PC-3 (cell line): ENCODE measurements at regions of chr12 and their contacts with region 1.

Region 1: GRCh38 chr12:121550974-121551634 is 29.7 kb downstream of the KDM2B start:
- DNase-seq: no peak
- ATAC-seq: no peak
- H3K4me3 ChIP-seq: no peak overlapping the region
- H3K27ac ChIP-seq: no peak overlapping the region
- H3K4me1 ChIP-seq: no peaks in the 10 kb centered on the region
- H3K27me3 ChIP-seq: no peaks in the 10 kb centered on the region
- CTCF ChIP-seq: no peak

Region 2: GRCh38 chr12:121513464-121514183 is 37.5 kb before region 1 on chr12:
- CTCF ChIA-PET with region 1: no interaction called
- POLR2A ChIA-PET with region 1: no interaction called
- intact Hi-C with region 1: no loop called
- DNase-seq: peak; percentile 44
- ATAC-seq: peak; percentile 93
- H3K4me3 ChIP-seq: no peak overlapping the region
- H3K27ac ChIP-seq: no peak overlapping the region
- H3K4me1 ChIP-seq: no peaks in the 10 kb centered on the region
- H3K27me3 ChIP-seq: no peaks in the 10 kb centered on the region
- CTCF ChIP-seq: no peak

Region 3: GRCh38 chr12:121530600-121531355 is 20.3 kb before region 1 on chr12:
- CTCF ChIA-PET with region 1: interaction called, 10 read pairs
- POLR2A ChIA-PET with region 1: no interaction called
- intact Hi-C with region 1: no loop called
- DNase-seq: peak; percentile 44
- ATAC-seq: peak; percentile 80
- H3K4me3 ChIP-seq: no peak overlapping the region
- H3K27ac ChIP-seq: no peak overlapping the region
- H3K4me1 ChIP-seq: 0 out of 2 replicates have a peak, but pooled peaks cover 5% of the 10 kb centered on the region
- H3K27me3 ChIP-seq: no peaks in the 10 kb centered on the region
- CTCF ChIP-seq: no peak

Region 4: DNA sequence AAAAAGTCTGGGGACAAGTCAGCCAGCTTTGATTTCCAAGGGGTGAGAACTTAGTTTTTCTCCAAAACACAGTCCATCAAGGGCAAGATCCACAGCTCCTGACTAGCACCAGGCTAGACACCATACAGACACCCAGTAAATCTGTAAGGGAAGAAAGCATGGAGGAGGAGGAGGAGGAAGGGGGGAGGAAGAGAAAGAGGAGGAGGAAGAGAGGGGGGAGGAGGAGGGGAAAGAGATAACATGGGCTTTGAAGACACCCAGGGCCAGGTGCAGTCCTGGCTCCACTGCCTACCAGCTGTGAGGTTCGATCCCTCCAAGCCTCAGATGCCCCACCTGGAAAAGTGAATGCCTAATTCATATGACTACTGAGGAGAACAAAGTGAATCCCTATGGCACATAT is 11.4 kb after region 1 on chr12:
- CTCF ChIA-PET with region 1: no interaction called
- POLR2A ChIA-PET with region 1: interaction called, 19 read pairs
- intact Hi-C with region 1: no loop called
- DNase-seq: no peak
- ATAC-seq: no peak
- H3K4me3 ChIP-seq: no peak overlapping the region
- H3K27ac ChIP-seq: no peak overlapping the region
- H3K4me1 ChIP-seq: no peaks in the 10 kb centered on the region
- H3K27me3 ChIP-seq: no peaks in the 10 kb centered on the region
- CTCF ChIP-seq: no peak

Region 5: GRCh38 chr12:121579981-121580868 is 29.1 kb after region 1 on chr12:
- CTCF ChIA-PET with region 1: interaction called, 24 read pairs
- POLR2A ChIA-PET with region 1: interaction called, 3 read pairs
- intact Hi-C with region 1: no loop called
- DNase-seq: peak; percentile 63
- ATAC-seq: peak; percentile 63
- H3K4me3 ChIP-seq: peak overlapping the region; percentile 82
- H3K27ac ChIP-seq: peak overlapping the region; percentile 38
- H3K4me1 ChIP-seq: peaks cover 50% of the 10 kb centered on the region
- H3K27me3 ChIP-seq: no peaks in the 10 kb centered on the region
- CTCF ChIP-seq: no peak

Region 6: GRCh38 chr12:121626087-121626852 is 75.2 kb after region 1 on chr12 and contains the start of gene ORAI1:
- CTCF ChIA-PET with region 1: interaction called, 31 read pairs
- POLR2A ChIA-PET with region 1: no interaction called
- intact Hi-C with region 1: loop called (anchors 1 kb)
- DNase-seq: peak; percentile 99
- ATAC-seq: peak; percentile 70
- H3K4me3 ChIP-seq: peak within 1 kb of the TSS; percentile 79
- H3K27ac ChIP-seq: peak within 1 kb of the TSS; percentile 29
- H3K4me1 ChIP-seq: peaks cover 34% of the 10 kb centered on the region
- H3K27me3 ChIP-seq: no peaks in the 10 kb centered on the region
- CTCF ChIP-seq: no peak
- total RNA-seq, gene ORAI1: 31.4 and 35.0 TPM in 2 replicates

Region 7: DNA sequence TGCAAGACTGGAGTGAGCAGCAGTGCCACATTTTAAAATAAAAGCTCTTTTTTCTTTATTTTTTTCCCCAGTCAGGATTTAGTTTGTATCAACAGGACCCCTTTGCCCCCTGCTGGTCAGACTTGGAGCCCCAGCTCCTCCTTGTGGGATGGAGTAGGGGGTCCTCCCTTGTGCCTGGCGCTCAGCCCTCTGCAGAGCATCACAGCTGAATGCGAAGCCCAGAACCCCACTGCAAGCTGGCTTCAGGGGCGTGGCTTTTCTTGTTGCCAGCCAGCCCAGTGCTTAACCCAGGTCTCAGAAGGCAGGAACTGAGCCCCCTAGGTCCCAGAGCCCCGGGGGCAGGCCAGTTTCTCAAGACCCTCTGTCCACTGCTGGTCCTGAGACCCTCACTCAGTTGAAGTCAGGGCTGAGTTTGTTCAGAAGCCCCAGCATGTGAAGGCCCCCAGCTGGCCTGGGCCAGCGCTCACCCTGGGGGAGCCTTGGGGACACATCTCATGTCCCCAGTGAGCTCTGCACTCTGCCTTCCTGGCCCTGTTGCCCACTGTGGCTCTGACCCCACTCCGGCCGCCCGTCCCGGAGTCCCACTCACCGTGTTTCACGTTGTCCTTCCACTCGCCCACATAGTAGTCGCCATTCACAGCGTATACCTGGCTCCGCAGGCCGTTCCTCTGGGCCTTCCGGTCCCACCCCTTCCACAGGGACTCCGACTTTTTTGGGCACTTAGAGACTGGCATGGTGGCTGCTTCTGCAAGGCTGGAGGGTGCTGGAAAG is 117.8 kb after region 1 on chr12:
- CTCF ChIA-PET with region 1: interaction called, 49 read pairs
- POLR2A ChIA-PET with region 1: no interaction called
- intact Hi-C with region 1: loop called (anchors 1 kb)
- DNase-seq: peak; percentile 61
- ATAC-seq: no peak
- H3K4me3 ChIP-seq: no peak overlapping the region
- H3K27ac ChIP-seq: no peak overlapping the region
- H3K4me1 ChIP-seq: peaks cover 10% of the 10 kb centered on the region
- H3K27me3 ChIP-seq: no peaks in the 10 kb centered on the region
- CTCF ChIP-seq: peak; percentile 88

Region 8: DNA sequence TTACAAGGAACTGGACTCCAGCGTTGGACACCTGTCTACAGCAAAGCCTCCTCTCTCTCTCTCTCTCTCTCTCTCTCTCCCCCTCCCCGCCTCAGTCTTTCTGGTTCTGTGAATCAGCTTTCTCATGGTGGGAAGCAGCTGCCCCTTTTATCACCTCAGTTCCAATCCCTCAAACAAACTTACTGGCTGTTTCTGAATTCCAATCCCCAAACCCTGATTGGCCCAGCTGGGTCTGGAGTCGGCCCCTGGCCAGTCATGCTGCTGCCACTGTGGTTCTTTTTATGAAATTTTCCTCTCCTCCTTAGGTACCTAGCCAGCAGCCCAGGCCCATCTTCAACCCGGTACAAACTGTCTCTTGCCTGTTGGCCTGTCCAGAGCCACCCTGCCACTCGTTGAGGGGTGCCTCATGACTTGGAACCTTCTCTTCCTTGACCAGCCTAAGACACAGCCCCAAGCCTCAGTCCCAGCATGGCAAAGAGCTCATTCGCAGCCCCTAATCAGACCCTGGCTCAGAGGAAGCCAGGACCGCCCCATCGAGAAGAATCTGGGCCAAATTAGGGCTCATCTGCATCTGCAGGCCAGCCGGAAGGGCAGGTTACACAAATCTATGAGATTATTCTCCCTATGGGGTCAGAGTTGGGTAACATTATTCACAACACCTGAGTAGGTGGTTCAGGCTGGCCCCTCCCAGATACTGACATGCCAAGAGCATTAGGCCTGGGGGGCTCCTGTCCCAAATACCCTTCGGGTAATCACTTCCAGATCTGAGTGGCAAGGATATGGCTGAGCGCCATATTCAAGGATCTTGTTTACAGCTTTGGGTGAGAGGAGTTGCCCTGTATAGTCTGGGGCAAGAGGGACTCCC is 127.8 kb after region 1 on chr12:
- CTCF ChIA-PET with region 1: no interaction called
- POLR2A ChIA-PET with region 1: no interaction called
- intact Hi-C with region 1: loop called (anchors 1 kb)
- DNase-seq: no peak
- ATAC-seq: no peak; the same call in 1 of the 2 replicates
- H3K4me3 ChIP-seq: no peak overlapping the region
- H3K27ac ChIP-seq: no peak overlapping the region
- H3K4me1 ChIP-seq: no peaks in the 10 kb centered on the region
- H3K27me3 ChIP-seq: no peaks in the 10 kb centered on the region
- CTCF ChIP-seq: no peak